CD8-positive, alpha-beta memory T cell (primary cell): ENCODE measurements at regions of chr3 and their contacts with region 1.

Region 1: GRCh38 chr3:16290007-16290826 is 25.2 kb downstream of the OXNAD1 start:
- DNase-seq: peak; percentile 31 to 66 (median 53)
- H3K4me3 ChIP-seq: peak overlapping the region; percentile 93
- H3K4me3 Mint-ChIP-seq: peak overlapping the region; percentile 84 to 98 (median 92)
- H3K27ac ChIP-seq: no peak overlapping the region
- H3K27ac Mint-ChIP-seq: peak overlapping the region; percentile 85 to 98 (median 94)
- H3K4me1 ChIP-seq: peaks cover 69% of the 10 kb centered on the region
- H3K4me1 Mint-ChIP-seq: peaks cover 69 to 90% (median 86%) of the 10 kb centered on the region in 3 donors
- H3K27me3 ChIP-seq: no peaks in the 10 kb centered on the region
- H3K27me3 Mint-ChIP-seq: no peaks in the 10 kb centered on the region

Region 2: GRCh38 chr3:16270855-16271254 is 19.4 kb before region 1 on chr3:
- CTCF ChIA-PET with region 1: interaction called, 25 read pairs
- POLR2A ChIA-PET with region 1: interaction called, 5 read pairs
- DNase-seq: no peak
- H3K4me3 ChIP-seq: no peak overlapping the region
- H3K4me3 Mint-ChIP-seq: no peak overlapping the region
- H3K27ac ChIP-seq: no peak overlapping the region
- H3K27ac Mint-ChIP-seq: no peak overlapping the region
- H3K4me1 ChIP-seq: peaks cover 2% of the 10 kb centered on the region
- H3K4me1 Mint-ChIP-seq: peaks cover 17 to 23% (median 19%) of the 10 kb centered on the region in 3 donors
- H3K27me3 ChIP-seq: no peaks in the 10 kb centered on the region
- H3K27me3 Mint-ChIP-seq: no peaks in the 10 kb centered on the region

Region 3: GRCh38 chr3:16300881-16301359 is 10.7 kb after region 1 on chr3:
- CTCF ChIA-PET with region 1: interaction called, 77 read pairs
- POLR2A ChIA-PET with region 1: interaction called, 16 read pairs
- DNase-seq: peak; percentile 19 to 83 (median 75)
- H3K4me3 ChIP-seq: peak overlapping the region; percentile 40
- H3K4me3 Mint-ChIP-seq: peak overlapping the region; percentile 84 to 93 (median 88)
- H3K27ac ChIP-seq: peak overlapping the region; percentile 34
- H3K27ac Mint-ChIP-seq: peak overlapping the region; percentile 86 to 98 (median 95)
- H3K4me1 ChIP-seq: peaks cover 99% of the 10 kb centered on the region
- H3K4me1 Mint-ChIP-seq: peaks cover 91 to 99% (median 98%) of the 10 kb centered on the region in 3 donors
- H3K27me3 ChIP-seq: no peaks in the 10 kb centered on the region
- H3K27me3 Mint-ChIP-seq: no peaks in the 10 kb centered on the region

Region 4: GRCh38 chr3:16309558-16309957 is 19.3 kb after region 1 on chr3:
- CTCF ChIA-PET with region 1: interaction called, 286 read pairs
- POLR2A ChIA-PET with region 1: interaction called, 7 read pairs
- DNase-seq: peak in 4 of 5 donors; percentile 35 to 72 (median 68)
- H3K4me3 ChIP-seq: peak overlapping the region; percentile 12
- H3K4me3 Mint-ChIP-seq: peak overlapping the region; percentile 38 to 82 (median 76)
- H3K27ac ChIP-seq: peak overlapping the region; percentile 13
- H3K27ac Mint-ChIP-seq: peak overlapping the region; percentile 52 to 98 (median 95)
- H3K4me1 ChIP-seq: peaks cover 96% of the 10 kb centered on the region
- H3K4me1 Mint-ChIP-seq: peaks cover 85 to 96% (median 95%) of the 10 kb centered on the region in 3 donors
- H3K27me3 ChIP-seq: no peaks in the 10 kb centered on the region
- H3K27me3 Mint-ChIP-seq: peaks cover 0 to 3% of the 10 kb centered on the region in 2 donors

Region 5: GRCh38 chr3:16319307-16319706 is 29.1 kb after region 1 on chr3:
- CTCF ChIA-PET with region 1: interaction called, 286 read pairs
- POLR2A ChIA-PET with region 1: interaction called, 9 read pairs
- DNase-seq: peak; percentile 65 to 88 (median 73)
- H3K4me3 ChIP-seq: no peak overlapping the region
- H3K4me3 Mint-ChIP-seq: peak overlapping the region in 6 of 7 donors; percentile 1 to 46 (median 30)
- H3K27ac ChIP-seq: no peak overlapping the region
- H3K27ac Mint-ChIP-seq: peak overlapping the region; percentile 79 to 98 (median 92)
- H3K4me1 ChIP-seq: peaks cover 61% of the 10 kb centered on the region
- H3K4me1 Mint-ChIP-seq: peaks cover 66 to 73% (median 66%) of the 10 kb centered on the region in 3 donors
- H3K27me3 ChIP-seq: no peaks in the 10 kb centered on the region
- H3K27me3 Mint-ChIP-seq: peaks cover 0 to 5% of the 10 kb centered on the region in 2 donors

Region 6: DNA sequence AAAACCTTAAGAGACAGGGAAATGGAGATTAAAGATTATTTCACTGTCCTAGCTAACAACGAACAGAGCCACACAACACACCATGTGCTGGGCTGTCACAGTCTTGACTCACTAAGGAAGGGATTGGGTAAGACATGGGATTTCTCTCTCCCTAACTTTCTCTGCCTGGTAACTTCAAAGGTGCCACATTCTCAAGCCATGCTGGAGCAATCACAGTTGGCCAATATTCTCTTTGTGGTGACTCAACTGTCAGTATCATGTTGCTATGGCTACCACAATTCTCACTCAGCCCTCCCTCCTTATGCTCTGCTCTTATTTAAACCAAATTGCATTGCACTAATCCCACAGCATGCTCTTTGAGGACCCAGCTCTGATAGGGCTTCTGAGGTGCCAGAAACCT is 48.8 kb after region 1 on chr3:
- CTCF ChIA-PET with region 1: interaction called, 11 read pairs
- POLR2A ChIA-PET with region 1: interaction called, 3 read pairs
- DNase-seq: peak in 2 of 5 donors; percentile 34 to 59
- H3K4me3 ChIP-seq: no peak overlapping the region
- H3K4me3 Mint-ChIP-seq: peak overlapping the region in 6 of 7 donors; percentile 35 to 69 (median 46)
- H3K27ac ChIP-seq: peak overlapping the region; percentile 28
- H3K27ac Mint-ChIP-seq: peak overlapping the region; percentile 74 to 97 (median 91)
- H3K4me1 ChIP-seq: peaks cover 31% of the 10 kb centered on the region
- H3K4me1 Mint-ChIP-seq: peaks cover 61 to 81% (median 72%) of the 10 kb centered on the region in 3 donors
- H3K27me3 ChIP-seq: no peaks in the 10 kb centered on the region
- H3K27me3 Mint-ChIP-seq: peaks cover 0 to 1% of the 10 kb centered on the region in 2 donors

Region 7: GRCh38 chr3:16550676-16551341 is 260.6 kb after region 1 on chr3:
- CTCF ChIA-PET with region 1: interaction called, 30 read pairs
- POLR2A ChIA-PET with region 1: interaction called, 3 read pairs
- DNase-seq: peak; percentile 45 to 78 (median 71)
- H3K4me3 ChIP-seq: no peak overlapping the region
- H3K4me3 Mint-ChIP-seq: no peak overlapping the region
- H3K27ac ChIP-seq: no peak overlapping the region
- H3K27ac Mint-ChIP-seq: peak overlapping the region in 4 of 8 donors; percentile 7 to 79 (median 65)
- H3K4me1 ChIP-seq: peaks cover 5% of the 10 kb centered on the region
- H3K4me1 Mint-ChIP-seq: peaks cover 6 to 10% (median 7%) of the 10 kb centered on the region in 3 donors
- H3K27me3 ChIP-seq: no peaks in the 10 kb centered on the region
- H3K27me3 Mint-ChIP-seq: peaks cover 1 to 21% of the 10 kb centered on the region in 2 donors